Uterus (tissue), 4 donors: ENCODE measurements at regions of chr11 and their contacts with region 1.

Region 1: DNA sequence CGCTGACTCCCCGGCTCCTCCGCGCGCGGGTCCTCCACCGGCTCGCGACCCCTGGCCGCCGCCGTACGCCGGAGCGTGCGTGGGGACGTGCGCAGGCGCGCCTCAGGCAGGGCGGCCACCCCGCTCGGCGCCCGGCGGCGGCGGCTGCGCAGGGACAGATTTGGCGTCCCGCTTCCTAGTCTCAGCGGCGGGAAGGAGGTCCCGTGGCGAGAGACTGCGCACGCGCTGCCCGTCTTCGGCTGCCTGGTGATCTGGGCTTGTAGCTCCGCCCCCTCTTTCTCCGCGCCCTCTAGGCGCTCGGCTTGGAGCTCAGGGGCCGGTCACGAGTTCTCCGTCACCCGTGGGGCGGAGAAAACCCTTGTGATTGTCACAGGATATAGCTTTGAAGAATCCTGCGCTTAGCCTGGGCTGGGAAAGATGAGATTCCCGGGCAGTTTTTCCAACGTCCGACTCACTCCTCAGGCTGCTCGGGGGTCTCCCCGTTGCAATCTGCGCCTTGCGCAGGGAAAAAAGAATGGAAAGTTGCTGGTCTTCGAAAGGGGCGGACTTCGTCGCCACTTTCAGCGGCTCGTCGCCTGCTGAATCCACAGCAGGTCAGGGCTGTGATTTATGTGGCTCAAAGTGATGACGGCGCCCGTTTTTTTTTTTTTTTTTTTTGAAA is at the start of gene PATL1:
- DNase-seq: peak; percentile 99
- H3K4me3 ChIP-seq: peak within 1 kb of the TSS; percentile 96 to 98
- H3K27ac ChIP-seq: peak within 1 kb of the TSS; percentile 95 to 98
- H3K4me1 ChIP-seq: peaks cover 0 to 8% of the 10 kb centered on the region in 2 donors
- H3K27me3 ChIP-seq: no peaks in the 10 kb centered on the region
- CTCF ChIP-seq: peak in 1 of 4 experiments; percentile 6
- POLR2A ChIP-seq: peak; percentile 90 to 97
- total RNA-seq, gene PATL1: 3.5 to 43.0 (median 17.3) TPM

Region 2: GRCh38 chr11:59534676-59535075 is 134.4 kb before region 1 on chr11:
- intact Hi-C with region 1: loop called (anchors 10 kb)
- DNase-seq: no peak
- H3K4me3 ChIP-seq: no peak overlapping the region
- H3K27ac ChIP-seq: no peak overlapping the region
- H3K4me1 ChIP-seq: no peaks in the 10 kb centered on the region
- H3K27me3 ChIP-seq: no peaks in the 10 kb centered on the region
- CTCF ChIP-seq: no peak
- POLR2A ChIP-seq: no peak

Region 3: DNA sequence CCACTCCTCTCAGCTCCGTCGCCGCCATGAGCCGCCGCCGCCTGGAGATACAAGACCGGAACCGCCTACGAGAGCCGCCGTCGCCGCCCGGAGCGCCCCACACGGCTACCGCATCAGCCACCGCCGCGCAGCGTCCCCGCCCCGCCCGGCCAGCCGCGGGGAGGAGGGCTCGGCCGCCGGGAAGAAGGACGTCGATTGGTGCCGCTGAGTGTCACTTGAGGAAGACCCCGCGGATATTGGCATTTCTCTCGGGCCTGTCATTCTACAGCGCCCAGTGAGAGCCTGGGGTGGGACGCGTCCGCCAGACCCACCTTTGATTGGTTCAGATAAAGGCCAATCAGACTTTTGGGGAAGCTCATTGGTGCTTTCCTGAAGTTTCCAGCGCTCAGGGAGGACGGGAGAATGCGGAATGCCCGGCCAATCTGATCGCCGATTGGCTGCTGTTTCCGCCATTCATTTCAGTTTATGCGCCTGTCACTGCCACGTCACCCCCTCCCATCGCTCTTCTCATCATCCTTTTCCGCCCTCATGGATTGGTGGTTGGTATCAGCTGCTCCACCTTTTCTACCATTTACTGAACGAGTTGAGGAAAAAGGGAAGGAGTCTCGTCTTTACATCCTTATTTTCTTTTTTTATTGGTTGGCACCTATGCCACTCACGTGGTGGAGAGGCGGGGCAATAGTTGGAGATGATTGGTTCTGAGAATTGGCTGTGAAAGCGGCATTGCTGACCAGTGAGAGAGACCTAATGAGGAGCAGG is 53.3 kb before region 1 on chr11 and contains the start of gene OSBP:
- intact Hi-C with region 1: loop called (anchors 10 kb)
- DNase-seq: peak; percentile 100
- H3K4me3 ChIP-seq: peak within 1 kb of the TSS; percentile 81 to 97
- H3K27ac ChIP-seq: peak within 1 kb of the TSS; percentile 97 to 99
- H3K4me1 ChIP-seq: peaks cover 0 to 4% of the 10 kb centered on the region in 2 donors
- H3K27me3 ChIP-seq: no peaks in the 10 kb centered on the region
- CTCF ChIP-seq: peak in 2 of 4 experiments; percentile 7 to 42
- POLR2A ChIP-seq: peak; percentile 76 to 90
- total RNA-seq, gene OSBP: 27.4 to 51.0 (median 41.9) TPM